Activated CD8-positive, alpha-beta T cell treated with anti-CD3 and anti-CD28 coated beads for 36 hours (primary cell): ENCODE measurements at regions of chr7 and their contacts with region 1.

Region 1: DNA sequence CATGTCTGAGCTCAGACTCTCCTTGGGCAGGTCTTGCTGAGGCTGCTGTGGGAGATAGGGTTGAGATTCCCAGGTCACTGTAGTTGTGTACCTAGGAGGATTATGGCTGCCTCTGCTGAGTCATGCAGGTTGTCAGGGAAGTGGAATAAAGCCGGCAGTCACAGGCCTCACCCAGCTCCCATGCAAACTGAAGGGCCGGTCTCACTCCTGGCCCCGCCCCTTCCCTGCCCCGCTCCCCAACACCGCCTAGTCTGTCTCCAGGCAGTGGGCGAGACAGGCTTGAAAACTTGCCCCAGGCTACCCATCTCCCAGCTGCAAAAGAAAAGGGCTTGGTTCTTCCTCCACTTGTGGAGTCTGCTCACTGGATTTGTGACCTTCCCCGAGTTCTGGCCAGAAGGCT is 41.6 kb upstream of the SDHAF3 start:
- DNase-seq: no peak
- ATAC-seq: no peak
- H3K4me3 Mint-ChIP-seq: no peak overlapping the region
- H3K27ac Mint-ChIP-seq: no peak overlapping the region
- H3K4me1 Mint-ChIP-seq: peaks cover 7% of the 10 kb centered on the region
- H3K27me3 Mint-ChIP-seq: peaks cover 28% of the 10 kb centered on the region
- CTCF ChIP-seq: no peak

Region 2: GRCh38 chr7:97043281-97043680 is 32.6 kb before region 1 on chr7:
- CTCF ChIA-PET with region 1: no interaction called
- POLR2A ChIA-PET with region 1: no interaction called
- intact Hi-C with region 1: no loop called
- DNase-seq: no peak
- ATAC-seq: no peak
- H3K4me3 Mint-ChIP-seq: no peak overlapping the region
- H3K27ac Mint-ChIP-seq: no peak overlapping the region
- H3K4me1 Mint-ChIP-seq: no peaks in the 10 kb centered on the region
- H3K27me3 Mint-ChIP-seq: peaks cover 32% of the 10 kb centered on the region
- CTCF ChIP-seq: no peak

Region 3: DNA sequence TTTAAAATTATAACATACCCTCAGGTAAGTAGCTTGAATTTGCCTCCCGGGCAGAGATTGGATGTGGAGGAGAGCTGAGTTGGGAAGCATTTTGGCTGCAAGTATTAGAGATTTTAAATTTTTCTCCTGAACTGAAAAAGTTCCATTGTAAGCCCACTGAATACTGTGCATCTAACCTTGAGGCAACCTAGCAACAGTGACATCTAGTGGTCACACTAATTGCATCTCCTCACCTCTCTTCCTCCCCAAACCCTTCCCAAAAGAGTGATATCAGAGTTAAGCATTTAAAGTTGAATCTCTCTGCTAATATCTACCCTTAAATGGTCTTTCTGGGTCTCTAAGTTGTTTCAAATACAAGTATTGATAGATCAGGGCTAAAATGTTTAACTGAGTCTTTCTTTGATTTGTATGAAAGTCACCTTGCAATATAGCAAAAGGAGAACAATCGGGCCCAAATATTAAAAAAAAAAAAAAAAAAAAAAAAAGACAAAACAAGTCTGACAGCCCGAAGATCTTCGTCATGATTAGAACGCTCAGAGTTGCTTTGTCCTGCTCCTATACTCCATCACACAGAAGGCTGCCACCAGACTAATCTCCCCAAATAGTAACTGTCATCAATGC is 10.9 kb before region 1 on chr7:
- CTCF ChIA-PET with region 1: interaction called, 19 read pairs
- POLR2A ChIA-PET with region 1: no interaction called
- intact Hi-C with region 1: no loop called
- DNase-seq: peak; percentile 21
- ATAC-seq: no peak
- H3K4me3 Mint-ChIP-seq: no peak overlapping the region
- H3K27ac Mint-ChIP-seq: no peak overlapping the region
- H3K4me1 Mint-ChIP-seq: no peaks in the 10 kb centered on the region
- H3K27me3 Mint-ChIP-seq: peaks cover 8% of the 10 kb centered on the region
- CTCF ChIP-seq: peak; percentile 57

Region 4: GRCh38 chr7:97104719-97105238 is 28.9 kb after region 1 on chr7:
- CTCF ChIA-PET with region 1: no interaction called
- POLR2A ChIA-PET with region 1: no interaction called
- intact Hi-C with region 1: no loop called
- DNase-seq: peak; percentile 81
- ATAC-seq: peak; percentile 84
- H3K4me3 Mint-ChIP-seq: no peak overlapping the region
- H3K27ac Mint-ChIP-seq: no peak overlapping the region
- H3K4me1 Mint-ChIP-seq: no peaks in the 10 kb centered on the region
- H3K27me3 Mint-ChIP-seq: peaks cover 26% of the 10 kb centered on the region
- CTCF ChIP-seq: peak; percentile 63

Region 5: GRCh38 chr7:97145068-97145467 is 69.1 kb after region 1 on chr7:
- CTCF ChIA-PET with region 1: no interaction called
- POLR2A ChIA-PET with region 1: no interaction called
- intact Hi-C with region 1: no loop called
- DNase-seq: no peak
- ATAC-seq: no peak
- H3K4me3 Mint-ChIP-seq: no peak overlapping the region
- H3K27ac Mint-ChIP-seq: no peak overlapping the region
- H3K4me1 Mint-ChIP-seq: no peaks in the 10 kb centered on the region
- H3K27me3 Mint-ChIP-seq: no peaks in the 10 kb centered on the region
- CTCF ChIP-seq: peak; percentile 33

Region 6: GRCh38 chr7:97155897-97156418 is 80.0 kb after region 1 on chr7:
- CTCF ChIA-PET with region 1: no interaction called
- POLR2A ChIA-PET with region 1: no interaction called
- intact Hi-C with region 1: no loop called
- DNase-seq: no peak
- ATAC-seq: no peak
- H3K4me3 Mint-ChIP-seq: no peak overlapping the region
- H3K27ac Mint-ChIP-seq: no peak overlapping the region
- H3K4me1 Mint-ChIP-seq: no peaks in the 10 kb centered on the region
- H3K27me3 Mint-ChIP-seq: no peaks in the 10 kb centered on the region
- CTCF ChIP-seq: no peak